ENCODE measurements at regions of chrX and their contacts with region 1.

Region 1: DNA sequence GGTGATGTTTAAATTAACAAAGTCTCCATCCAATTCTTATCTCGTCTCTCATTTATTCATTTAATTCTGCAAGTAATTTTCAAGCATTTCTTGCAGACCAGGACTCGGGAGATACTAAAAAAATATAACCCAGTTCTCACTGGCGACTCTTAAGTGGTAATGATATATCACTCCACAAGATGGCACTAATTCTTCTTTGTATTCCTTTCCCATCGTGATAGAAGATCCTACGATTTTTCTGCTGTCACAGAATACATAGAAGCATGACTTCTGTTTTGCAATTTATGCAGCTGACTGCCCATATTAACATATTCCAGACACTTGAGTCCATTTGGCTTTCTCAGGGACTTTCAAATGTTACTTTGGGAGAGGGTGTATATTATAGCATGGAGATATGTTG is 64.0 kb upstream of the FGF13 start:
- DNase-seq: no peak
- ATAC-seq: no peak

Region 2: DNA sequence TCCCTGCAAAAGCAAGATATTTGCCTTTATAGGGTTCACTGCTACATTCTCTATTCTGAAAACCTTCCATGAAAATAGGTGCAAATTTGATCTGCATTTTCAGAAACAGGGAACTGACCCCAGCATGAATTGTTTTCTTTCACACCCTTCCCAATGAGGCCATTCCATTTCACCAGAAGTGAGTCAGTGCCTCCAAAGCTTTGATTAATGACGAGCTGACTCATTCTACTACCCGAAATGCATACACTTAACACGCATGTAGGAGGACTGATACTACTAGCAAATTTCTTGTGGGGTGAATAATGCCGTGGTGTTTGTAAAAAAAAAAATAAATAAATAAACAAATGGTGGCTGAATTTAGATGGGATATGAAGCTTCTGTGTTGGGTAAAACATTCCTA is 82.9 kb after region 1 on chrX:
- intact Hi-C with region 1: no loop called
- DNase-seq: no peak
- ATAC-seq: no peak

Region 3: GRCh38 chrX:139559383-139560042 is 784.0 kb after region 1 on chrX:
- intact Hi-C with region 1: loop called (anchors 10 kb)
- DNase-seq: no peak
- ATAC-seq: no peak